Right ventricle myocardium inferior (tissue), 1 donor: ENCODE measurements at regions of chr17 and their contacts with region 1.

Region 1: GRCh38 chr17:28896884-28897768 is at the start of gene FLOT2:
- DNase-seq: peak; percentile 86
- ATAC-seq: peak; percentile 83
- total RNA-seq, gene FLOT2: 118 TPM

Region 2: DNA sequence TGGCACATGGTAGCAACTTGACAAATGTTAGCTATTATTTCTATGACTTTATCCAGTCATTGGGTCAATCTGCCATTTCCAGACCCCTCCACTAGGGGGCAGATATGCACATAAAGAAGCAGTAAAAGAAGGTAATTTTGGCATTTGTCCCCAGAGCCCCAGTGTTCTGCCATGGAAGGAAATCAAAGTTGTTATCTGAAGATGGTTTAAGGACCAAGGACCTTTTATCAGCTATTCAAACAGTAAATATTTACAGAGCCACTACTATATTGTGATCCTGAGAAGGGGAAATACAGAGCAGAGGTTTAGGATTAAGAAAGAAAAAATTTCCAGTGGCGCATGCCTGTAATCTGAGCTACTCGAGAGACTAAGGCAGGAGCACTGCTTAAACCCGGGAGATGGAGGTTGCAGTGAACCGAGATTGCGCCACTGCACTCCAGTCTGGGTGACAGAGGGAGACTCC is 133.3 kb before region 1 on chr17:
- intact Hi-C with region 1: loop called (anchors 5 kb)
- DNase-seq: no peak
- ATAC-seq: no peak

Region 3: DNA sequence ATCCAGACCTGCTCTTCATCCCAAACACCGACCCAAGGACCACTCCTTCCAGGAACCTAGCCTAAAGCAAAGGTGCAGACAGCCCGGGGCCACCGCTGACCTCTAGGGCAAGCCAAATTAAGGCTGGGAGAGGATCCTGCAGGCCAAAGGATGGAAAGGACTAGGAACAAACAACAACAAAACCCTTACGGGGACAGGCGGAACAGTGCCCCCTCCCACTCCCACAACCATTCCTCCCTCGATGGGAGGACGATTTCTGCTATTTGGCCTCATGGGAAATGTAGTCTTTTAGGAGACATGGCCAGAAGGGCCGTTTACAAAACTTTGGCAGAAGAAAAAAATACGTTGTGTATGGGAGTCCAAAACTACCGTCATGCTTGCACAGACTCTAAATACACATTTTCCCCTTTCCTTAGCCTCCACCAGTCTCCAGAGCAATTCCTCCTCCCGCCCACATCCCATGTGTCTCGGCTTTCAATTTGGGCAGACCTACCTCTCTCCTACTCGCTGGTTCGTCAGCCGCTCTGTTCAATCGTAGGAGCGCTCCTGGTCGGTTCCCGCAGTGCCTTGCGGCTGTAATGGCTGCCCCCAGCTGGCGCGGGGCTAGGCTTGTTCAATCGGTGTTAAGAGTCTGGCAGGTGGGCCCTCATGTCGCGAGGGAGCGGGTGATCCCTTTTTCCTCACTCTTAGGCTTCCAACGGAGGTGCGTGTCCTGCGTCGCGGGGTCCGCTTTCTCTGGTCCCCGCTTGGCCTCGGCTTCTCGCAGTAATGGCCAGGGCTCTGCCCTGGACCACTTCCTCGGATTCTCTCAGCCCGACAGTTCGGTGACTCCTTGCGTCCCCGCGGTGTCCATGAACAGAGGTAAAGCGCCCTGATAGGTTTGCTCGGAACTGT is 42.4 kb before region 1 on chr17 and contains the start of gene ERAL1:
- intact Hi-C with region 1: loop called (anchors 2 kb)
- DNase-seq: peak; percentile 89
- ATAC-seq: peak; percentile 99
- total RNA-seq, gene ERAL1: 37.2 TPM

Region 4: GRCh38 chr17:28937044-28937729 is 40.1 kb after region 1 on chr17:
- intact Hi-C with region 1: loop called (anchors 1 kb)
- DNase-seq: no peak
- ATAC-seq: peak; percentile 17

Region 5: GRCh38 chr17:28951991-28952975 is 55.2 kb after region 1 on chr17:
- intact Hi-C with region 1: loop called (anchors 5 kb)
- DNase-seq: peak; percentile 97
- ATAC-seq: peak; percentile 88